ENCODE measurements at regions of chr16 and their contacts with region 1.

Region 1: GRCh38 chr16:86029131-86029741 is 130.3 kb downstream of the IRF8 start:
- DNase-seq: no peak
- ATAC-seq: peak; percentile 33
- H3K4me3 Mint-ChIP-seq: no peak overlapping the region
- H3K27ac Mint-ChIP-seq: no peak overlapping the region
- H3K4me1 Mint-ChIP-seq: peaks cover 18% of the 10 kb centered on the region
- H3K27me3 Mint-ChIP-seq: peaks cover 16% of the 10 kb centered on the region
- CTCF ChIP-seq: no peak

Region 2: GRCh38 chr16:85735225-85735635 is 294.0 kb before region 1 on chr16:
- CTCF ChIA-PET with region 1: no interaction called
- POLR2A ChIA-PET with region 1: no interaction called
- DNase-seq: no peak
- ATAC-seq: no peak
- H3K4me3 Mint-ChIP-seq: no peak overlapping the region
- H3K27ac Mint-ChIP-seq: no peak overlapping the region
- H3K4me1 Mint-ChIP-seq: peaks cover 8% of the 10 kb centered on the region
- H3K27me3 Mint-ChIP-seq: no peaks in the 10 kb centered on the region; the same call in 1 of the 2 replicates
- CTCF ChIP-seq: no peak

Region 3: DNA sequence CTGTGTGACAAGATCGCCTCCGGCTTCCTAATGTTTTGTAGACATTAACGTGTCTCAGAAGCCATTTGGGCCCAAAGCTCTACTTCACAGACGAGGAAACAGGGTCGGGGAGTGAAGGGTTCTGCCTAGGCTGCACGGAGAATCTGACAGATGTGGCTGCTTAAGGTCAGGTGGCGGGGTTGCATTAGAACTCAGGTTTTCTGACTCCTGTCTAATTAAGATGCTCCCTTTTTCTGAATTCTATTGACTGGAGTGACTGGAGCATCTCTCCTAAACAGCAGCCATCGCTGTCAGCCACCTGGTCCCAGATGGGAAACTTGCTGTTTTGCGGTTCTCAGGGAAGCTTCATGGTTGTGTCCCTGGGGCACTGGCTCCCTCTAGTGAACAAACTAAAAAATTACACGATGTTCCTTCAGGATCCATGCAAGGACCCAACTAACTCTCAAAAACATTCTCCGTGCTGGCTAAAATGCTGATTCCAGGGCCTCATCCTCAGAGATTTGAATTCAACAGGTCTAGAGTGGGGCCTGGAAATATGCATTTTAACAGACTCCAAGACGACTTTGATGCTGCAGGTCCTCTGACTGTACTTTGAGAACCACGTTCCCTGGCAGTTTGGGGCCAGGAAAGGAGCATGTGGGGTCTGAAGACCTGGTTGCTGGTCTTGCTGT is 12.9 kb before region 1 on chr16:
- CTCF ChIA-PET with region 1: interaction called, 16 read pairs
- POLR2A ChIA-PET with region 1: no interaction called
- DNase-seq: peak; percentile 52
- ATAC-seq: peak; percentile 78
- H3K4me3 Mint-ChIP-seq: no peak overlapping the region
- H3K27ac Mint-ChIP-seq: no peak overlapping the region
- H3K4me1 Mint-ChIP-seq: no peaks in the 10 kb centered on the region
- H3K27me3 Mint-ChIP-seq: peaks cover 9% of the 10 kb centered on the region
- CTCF ChIP-seq: peak; percentile 72

Region 4: DNA sequence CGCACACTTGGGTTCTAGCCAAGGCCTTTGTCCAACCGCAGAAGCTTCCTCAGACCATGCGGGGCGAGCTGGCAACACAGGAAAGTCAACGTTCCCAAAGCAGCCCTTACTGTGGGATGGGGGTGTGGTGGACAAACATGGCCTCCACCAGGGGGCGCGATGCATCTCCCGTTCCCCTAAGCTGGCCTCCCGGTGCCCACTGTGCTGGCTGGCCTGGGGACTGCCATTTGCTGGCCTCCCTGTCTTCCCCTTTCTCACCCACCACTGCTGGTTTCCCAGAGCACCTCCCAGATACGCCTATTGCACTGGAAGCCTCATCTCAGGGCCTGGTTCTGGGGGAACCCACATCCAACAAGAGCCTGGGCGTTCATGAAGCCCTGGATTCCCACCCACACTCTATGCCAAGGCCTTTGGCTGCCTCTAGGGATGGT is 15.0 kb after region 1 on chr16:
- CTCF ChIA-PET with region 1: interaction called, 41 read pairs
- POLR2A ChIA-PET with region 1: no interaction called
- DNase-seq: peak; percentile 85
- ATAC-seq: peak; percentile 91
- H3K4me3 Mint-ChIP-seq: no peak overlapping the region
- H3K27ac Mint-ChIP-seq: no peak overlapping the region
- H3K4me1 Mint-ChIP-seq: peaks cover 12% of the 10 kb centered on the region
- H3K27me3 Mint-ChIP-seq: no peaks in the 10 kb centered on the region; the same call in 1 of the 2 replicates
- CTCF ChIP-seq: peak; percentile 90

Region 5: DNA sequence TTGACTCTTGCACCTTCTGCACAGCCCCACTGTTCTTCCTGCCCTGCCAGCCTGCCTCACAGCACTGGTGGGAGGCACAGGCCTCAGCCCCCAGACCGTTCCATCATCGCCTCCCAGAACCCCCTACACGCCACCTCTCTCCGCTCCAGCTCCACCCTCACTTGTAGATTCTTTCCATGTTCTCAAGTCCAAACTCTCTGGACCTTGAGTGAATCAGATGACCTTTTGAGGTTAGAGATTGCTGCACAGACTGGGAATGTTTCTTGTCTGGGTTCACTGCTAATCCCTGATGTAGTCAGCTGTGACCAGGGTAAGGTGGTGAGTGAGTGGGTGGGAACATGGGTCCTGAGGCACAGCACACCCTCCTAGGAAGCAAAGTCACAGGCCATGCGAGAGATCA is 142.1 kb after region 1 on chr16:
- CTCF ChIA-PET with region 1: no interaction called
- POLR2A ChIA-PET with region 1: no interaction called
- DNase-seq: no peak
- ATAC-seq: no peak
- H3K4me3 Mint-ChIP-seq: no peak overlapping the region
- H3K27ac Mint-ChIP-seq: no peak overlapping the region
- H3K4me1 Mint-ChIP-seq: no peaks in the 10 kb centered on the region
- H3K27me3 Mint-ChIP-seq: peaks cover 10% of the 10 kb centered on the region; the same call in 1 of the 2 replicates
- CTCF ChIP-seq: no peak